Tibial artery (tissue), 4 donors: ENCODE measurements at regions of chr4 and their contacts with region 1.

Region 1: GRCh38 chr4:77095101-77095821 is 19.5 kb upstream of the CCNI start:
- DNase-seq: peak; percentile 85
- H3K4me3 ChIP-seq: no peak overlapping the region
- H3K27ac ChIP-seq: peak overlapping the region in 1 of 2 donors; percentile 2
- H3K4me1 ChIP-seq: peaks cover 0 to 8% (median 2%) of the 10 kb centered on the region in 4 donors
- H3K27me3 ChIP-seq: no peaks in the 10 kb centered on the region
- CTCF ChIP-seq: peak; percentile 83 to 86

Region 2: GRCh38 chr4:77141964-77142645 is 46.8 kb after region 1 on chr4:
- intact Hi-C with region 1: no loop called
- DNase-seq: no peak
- H3K4me3 ChIP-seq: no peak overlapping the region
- H3K27ac ChIP-seq: no peak overlapping the region
- H3K4me1 ChIP-seq: peaks cover 0 to 4% (median 2%) of the 10 kb centered on the region in 4 donors
- H3K27me3 ChIP-seq: no peaks in the 10 kb centered on the region
- CTCF ChIP-seq: no peak

Region 3: DNA sequence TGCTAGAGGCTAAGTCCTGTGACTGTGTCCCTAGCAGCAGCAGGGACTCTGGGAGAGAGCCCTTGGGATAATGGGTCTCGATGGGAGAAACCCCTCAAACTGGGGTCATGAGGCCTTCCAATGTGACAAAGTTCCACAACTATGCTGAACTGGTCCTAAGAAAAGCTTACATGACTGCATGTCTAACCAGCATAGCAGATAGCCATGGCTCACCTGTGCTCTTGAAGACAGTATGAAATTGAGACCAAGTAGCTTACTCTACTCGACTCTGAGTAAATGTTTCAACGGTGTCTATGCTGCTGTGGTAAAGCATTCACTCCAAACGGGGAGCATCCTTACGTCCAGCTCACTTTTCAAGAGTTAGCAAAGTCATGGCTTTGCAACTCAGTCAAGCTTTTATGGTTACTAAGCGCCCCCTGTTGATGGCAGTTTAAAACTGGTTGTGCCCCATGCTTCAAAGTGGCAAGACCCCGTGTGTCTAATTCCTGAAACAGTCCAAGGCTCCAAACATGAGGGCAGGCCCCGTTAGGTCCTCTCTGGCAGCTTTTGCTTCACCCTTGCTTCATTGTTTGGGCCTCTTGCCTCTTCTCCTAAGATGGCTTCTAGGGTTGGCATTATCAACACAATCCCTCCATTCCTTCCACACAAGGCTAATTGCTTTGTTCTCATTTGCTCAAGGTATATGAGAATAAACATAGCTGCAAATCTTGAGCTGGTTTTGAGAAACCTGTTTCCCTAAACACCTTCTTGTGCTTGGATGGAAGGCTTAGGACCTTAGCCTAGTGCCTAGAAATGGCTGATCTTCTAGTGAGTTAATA is 108.3 kb after region 1 on chr4:
- intact Hi-C with region 1: loop called (anchors 10 kb)
- DNase-seq: peak; percentile 61 to 72
- H3K4me3 ChIP-seq: no peak overlapping the region
- H3K27ac ChIP-seq: no peak overlapping the region
- H3K4me1 ChIP-seq: no peaks in the 10 kb centered on the region
- H3K27me3 ChIP-seq: no peaks in the 10 kb centered on the region
- CTCF ChIP-seq: peak; percentile 67 to 73

Region 4: GRCh38 chr4:77310931-77311330 is 215.7 kb after region 1 on chr4:
- intact Hi-C with region 1: no loop called
- DNase-seq: no peak
- H3K4me3 ChIP-seq: no peak overlapping the region
- H3K27ac ChIP-seq: no peak overlapping the region
- H3K4me1 ChIP-seq: no peaks in the 10 kb centered on the region
- H3K27me3 ChIP-seq: no peaks in the 10 kb centered on the region
- CTCF ChIP-seq: no peak